ENCODE measurements at regions of chr11 and their contacts with region 1.

Region 1: DNA sequence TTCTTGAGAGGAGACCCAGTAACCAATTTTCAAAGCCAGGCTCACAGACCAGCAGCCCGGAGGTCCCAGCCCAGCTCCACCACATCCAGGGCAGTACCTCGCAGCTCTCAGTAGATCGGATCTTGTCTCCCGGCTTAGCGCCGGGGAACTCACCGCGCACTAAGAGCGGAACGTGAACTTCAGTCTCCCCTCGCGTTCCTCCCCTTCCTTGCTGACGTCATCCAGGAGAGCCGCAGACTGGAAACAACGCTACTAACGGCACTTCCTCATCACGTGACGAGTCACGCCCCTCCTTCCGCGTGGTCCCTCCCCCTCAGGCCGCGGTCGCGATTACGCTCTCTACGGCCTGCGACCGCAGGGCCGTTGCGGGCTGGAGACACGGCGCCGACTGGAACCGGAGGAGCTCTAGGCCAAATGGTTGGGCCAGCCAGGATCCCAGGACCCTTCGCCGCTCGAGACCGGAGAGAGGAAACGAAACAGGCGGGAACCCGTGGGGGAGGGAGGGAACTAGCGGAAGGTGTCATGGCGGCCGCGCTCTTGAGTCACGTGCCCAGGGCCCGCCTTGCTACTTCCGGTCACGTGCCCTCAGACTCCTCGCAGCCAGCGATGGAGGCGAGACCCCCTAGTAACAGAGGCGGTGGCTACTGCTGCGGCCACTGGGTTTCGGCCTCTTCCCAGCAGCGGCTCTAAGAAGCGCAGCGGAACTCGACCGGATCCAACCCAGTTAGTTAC is at the starts of genes GTF2H1 and HPS5:
- DNase-seq: peak; percentile 90 to 99 (median 93)
- ATAC-seq: peak; percentile 87
- H3K4me3 ChIP-seq: peak within 1 kb of the TSS; percentile 74
- H3K4me3 Mint-ChIP-seq: peak within 1 kb of the TSS; percentile 94
- H3K27ac ChIP-seq: peak within 1 kb of the TSS; percentile 97 to 98
- H3K27ac Mint-ChIP-seq: peak within 1 kb of the TSS; percentile 99
- H3K4me1 ChIP-seq: peaks cover 25% of the 10 kb centered on the region
- H3K4me1 Mint-ChIP-seq: peaks cover 87% of the 10 kb centered on the region
- H3K27me3 ChIP-seq: no peaks in the 10 kb centered on the region
- H3K27me3 Mint-ChIP-seq: no peaks in the 10 kb centered on the region
- CTCF ChIP-seq: no peak
- total RNA-seq, gene GTF2H1: 15.1 to 17.7 TPM
- total RNA-seq, gene HPS5: 8.8 to 9.3 TPM

Region 2: DNA sequence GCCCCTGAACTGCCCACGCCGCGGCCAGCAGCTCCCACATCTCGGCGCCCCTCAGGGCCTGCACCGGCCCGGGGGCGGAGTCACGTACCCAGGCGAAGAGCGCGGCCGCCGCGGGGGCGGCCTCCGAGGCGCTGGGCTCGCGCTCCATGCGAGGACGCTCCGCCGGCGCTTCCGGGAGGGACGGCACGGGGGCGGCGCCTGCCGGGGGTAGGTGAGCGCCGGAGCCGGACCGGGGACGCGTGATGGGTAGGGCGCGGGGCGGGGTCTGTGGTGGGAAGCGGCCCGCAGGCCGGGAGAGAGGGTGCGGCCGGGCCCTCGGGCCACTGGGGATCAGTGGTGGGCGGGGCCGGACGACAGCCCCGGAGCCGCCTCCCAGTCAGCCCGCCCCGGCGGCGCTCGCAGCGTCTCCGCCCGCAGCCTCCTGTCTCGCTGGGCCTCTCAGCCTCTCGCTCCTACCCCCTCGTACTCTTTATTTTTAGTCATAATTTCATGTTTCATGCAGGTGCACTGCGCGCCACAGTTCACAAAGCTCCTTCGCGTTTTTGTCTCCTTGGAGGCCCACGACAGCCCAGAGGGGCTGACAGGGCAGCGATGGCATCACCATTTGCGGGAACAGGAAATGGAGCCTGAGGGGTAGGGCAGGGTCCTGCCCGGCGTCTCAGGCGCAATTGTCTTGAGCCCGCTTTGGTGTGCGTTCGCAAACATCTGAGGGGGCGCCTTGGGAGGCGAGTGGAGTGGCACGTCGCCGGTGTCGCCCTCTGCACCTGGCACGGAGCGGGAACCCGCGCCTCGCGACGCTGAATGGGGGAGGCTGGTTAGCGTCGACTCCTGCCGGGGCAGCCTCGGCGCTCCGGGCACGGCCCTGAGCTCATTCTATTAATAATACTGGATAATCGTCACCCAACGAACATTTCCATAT is 309.0 kb before region 1 on chr11 and contains the start of gene SERGEF:
- CTCF ChIA-PET with region 1: no interaction called
- POLR2A ChIA-PET with region 1: interaction called, 7 read pairs
- intact Hi-C with region 1: loop called (anchors 5 kb)
- DNase-seq: peak; percentile 79 to 97 (median 93)
- ATAC-seq: peak; percentile 80
- H3K4me3 ChIP-seq: peak within 1 kb of the TSS; percentile 98
- H3K4me3 Mint-ChIP-seq: peak within 1 kb of the TSS; percentile 98
- H3K27ac ChIP-seq: peak within 1 kb of the TSS; percentile 82 to 83
- H3K27ac Mint-ChIP-seq: peak within 1 kb of the TSS; percentile 92
- H3K4me1 ChIP-seq: peaks cover 22% of the 10 kb centered on the region
- H3K4me1 Mint-ChIP-seq: peaks cover 33% of the 10 kb centered on the region
- H3K27me3 ChIP-seq: no peaks in the 10 kb centered on the region
- H3K27me3 Mint-ChIP-seq: no peaks in the 10 kb centered on the region
- CTCF ChIP-seq: no peak
- total RNA-seq, gene SERGEF: 35.2 to 37.1 TPM

Region 3: DNA sequence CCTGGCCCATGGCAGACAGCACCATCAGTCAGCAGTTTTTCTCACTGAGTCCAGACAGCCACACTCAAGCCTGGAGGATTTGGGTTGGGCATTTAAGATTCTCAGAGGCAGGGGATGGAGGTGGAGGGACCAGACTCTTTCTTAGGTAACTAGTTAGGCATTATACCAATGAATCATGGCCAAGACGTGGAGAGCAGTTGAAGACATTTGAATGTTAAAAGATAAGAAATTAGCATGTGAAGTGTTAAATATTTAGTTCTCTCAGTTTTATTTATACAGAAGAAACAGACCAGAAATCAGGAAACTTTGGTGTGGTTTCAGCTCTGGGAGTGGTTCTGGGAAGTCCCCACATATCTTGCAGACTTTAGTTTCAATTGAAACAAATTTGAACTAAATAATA is 10.2 kb after region 1 on chr11:
- CTCF ChIA-PET with region 1: no interaction called
- POLR2A ChIA-PET with region 1: interaction called, 29 read pairs
- intact Hi-C with region 1: no loop called
- DNase-seq: peak in 4 of 14 experiments; percentile 22 to 78 (median 73)
- ATAC-seq: peak; percentile 74
- H3K4me3 ChIP-seq: peak overlapping the region; percentile 15
- H3K4me3 Mint-ChIP-seq: peak overlapping the region; percentile 2
- H3K27ac ChIP-seq: peak overlapping the region; percentile 73 to 83
- H3K27ac Mint-ChIP-seq: peak overlapping the region; percentile 89
- H3K4me1 ChIP-seq: peaks cover 34% of the 10 kb centered on the region
- H3K4me1 Mint-ChIP-seq: peaks cover 64% of the 10 kb centered on the region
- H3K27me3 ChIP-seq: no peaks in the 10 kb centered on the region
- H3K27me3 Mint-ChIP-seq: no peaks in the 10 kb centered on the region
- CTCF ChIP-seq: no peak

Region 4: DNA sequence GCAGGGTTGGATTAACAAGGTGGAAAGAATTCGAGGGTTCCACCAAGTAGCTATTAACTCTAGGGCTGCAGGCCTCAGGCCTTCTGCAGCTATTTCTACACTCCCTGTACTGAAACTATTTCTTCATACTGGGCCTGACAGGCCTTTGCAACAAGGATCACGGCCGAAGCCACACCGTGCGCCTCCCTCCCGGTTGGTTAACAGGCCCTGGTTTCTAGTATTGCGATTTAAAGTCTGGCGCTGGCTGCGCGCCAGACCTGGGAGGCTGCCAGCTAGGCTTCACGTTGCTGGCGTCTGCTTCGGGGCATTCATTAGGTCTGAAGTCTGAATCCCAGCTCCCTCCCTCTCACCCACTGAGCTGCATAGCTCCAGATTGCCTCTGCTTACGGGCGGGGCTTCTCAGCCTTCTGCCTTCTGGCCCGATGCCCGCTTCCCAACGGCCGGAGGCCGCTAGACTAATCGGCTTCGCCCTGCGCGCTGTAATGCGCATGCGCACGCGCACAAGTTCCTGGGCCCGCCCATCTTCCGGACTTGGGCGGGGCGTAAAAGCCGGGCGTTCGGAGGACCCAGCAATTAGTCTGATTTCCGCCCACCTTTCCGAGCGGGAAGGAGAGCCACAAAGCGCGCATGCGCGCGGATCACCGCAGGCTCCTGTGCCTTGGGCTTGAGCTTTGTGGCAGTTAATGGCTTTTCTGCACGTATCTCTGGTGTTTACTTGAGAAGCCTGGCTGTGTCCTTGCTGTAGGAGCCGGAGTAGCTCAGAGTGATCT is 73.8 kb after region 1 on chr11:
- CTCF ChIA-PET with region 1: no interaction called
- POLR2A ChIA-PET with region 1: interaction called, 148 read pairs
- intact Hi-C with region 1: loop called (anchors 1 to 2 kb)
- DNase-seq: peak; percentile 84 to 98 (median 92)
- ATAC-seq: peak; percentile 62
- H3K4me3 ChIP-seq: peak overlapping the region; percentile 100
- H3K4me3 Mint-ChIP-seq: peak overlapping the region; percentile 99
- H3K27ac ChIP-seq: peak overlapping the region; percentile 89 to 90
- H3K27ac Mint-ChIP-seq: peak overlapping the region; percentile 99
- H3K4me1 ChIP-seq: peaks cover 50% of the 10 kb centered on the region
- H3K4me1 Mint-ChIP-seq: peaks cover 59% of the 10 kb centered on the region
- H3K27me3 ChIP-seq: no peaks in the 10 kb centered on the region
- H3K27me3 Mint-ChIP-seq: no peaks in the 10 kb centered on the region
- CTCF ChIP-seq: no peak

Region 5: GRCh38 chr11:18721561-18722292 is 399.6 kb after region 1 on chr11:
- CTCF ChIA-PET with region 1: no interaction called
- POLR2A ChIA-PET with region 1: no interaction called
- intact Hi-C with region 1: loop called in 1 of 2 experiments (anchors 10 kb)
- DNase-seq: peak in 13 of 14 experiments; percentile 20 to 77 (median 35)
- ATAC-seq: peak; percentile 45
- H3K4me3 ChIP-seq: peak overlapping the region; percentile 94
- H3K4me3 Mint-ChIP-seq: peak overlapping the region; percentile 82
- H3K27ac ChIP-seq: peak overlapping the region in 1 of 2 donors; percentile 29
- H3K27ac Mint-ChIP-seq: peak overlapping the region; percentile 35
- H3K4me1 ChIP-seq: peaks cover 21% of the 10 kb centered on the region
- H3K4me1 Mint-ChIP-seq: peaks cover 10% of the 10 kb centered on the region
- H3K27me3 ChIP-seq: no peaks in the 10 kb centered on the region
- H3K27me3 Mint-ChIP-seq: no peaks in the 10 kb centered on the region
- CTCF ChIP-seq: peak; percentile 88